Cardiac septum (tissue), 1 donor: ENCODE measurements at regions of chr11 and their contacts with region 1.

Region 1: DNA sequence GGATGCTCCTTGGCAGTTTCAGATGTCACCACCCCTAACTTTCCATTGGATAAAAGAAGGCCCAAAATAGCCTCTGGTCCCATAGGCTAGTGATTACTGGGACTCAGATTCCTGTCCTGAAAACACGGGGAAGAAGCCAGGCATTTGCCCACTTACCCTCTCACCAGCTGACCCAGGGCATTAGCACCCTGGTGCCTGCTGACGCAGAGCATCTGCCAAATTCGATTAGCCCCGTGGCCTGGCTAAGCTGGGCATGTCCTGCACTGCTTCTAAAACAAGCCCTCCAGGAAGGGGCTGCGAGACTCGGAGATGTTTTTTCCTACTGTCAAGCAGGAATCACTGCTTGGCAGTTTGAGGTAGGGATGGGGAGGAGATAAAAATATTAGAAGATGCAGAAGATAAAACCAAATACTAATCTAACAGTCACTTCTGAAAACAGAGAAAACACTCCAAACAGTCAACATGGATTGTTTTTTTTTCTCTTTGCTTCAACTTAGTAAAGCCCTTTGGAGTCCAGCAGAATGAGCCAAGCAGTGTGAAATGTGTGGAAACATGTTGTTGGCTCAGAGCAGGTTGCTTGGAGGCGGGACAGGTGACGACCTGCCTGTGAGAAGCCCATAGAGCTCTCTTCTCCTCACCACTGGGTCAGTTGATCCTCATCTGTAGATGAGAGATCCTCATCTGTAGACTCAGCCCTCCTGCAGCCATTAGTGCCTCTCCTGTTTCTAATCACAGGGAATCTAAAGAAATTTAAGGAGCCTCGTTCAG is 54.0 kb downstream of the BDNF start:
- DNase-seq: peak; percentile 77

Region 2: DNA sequence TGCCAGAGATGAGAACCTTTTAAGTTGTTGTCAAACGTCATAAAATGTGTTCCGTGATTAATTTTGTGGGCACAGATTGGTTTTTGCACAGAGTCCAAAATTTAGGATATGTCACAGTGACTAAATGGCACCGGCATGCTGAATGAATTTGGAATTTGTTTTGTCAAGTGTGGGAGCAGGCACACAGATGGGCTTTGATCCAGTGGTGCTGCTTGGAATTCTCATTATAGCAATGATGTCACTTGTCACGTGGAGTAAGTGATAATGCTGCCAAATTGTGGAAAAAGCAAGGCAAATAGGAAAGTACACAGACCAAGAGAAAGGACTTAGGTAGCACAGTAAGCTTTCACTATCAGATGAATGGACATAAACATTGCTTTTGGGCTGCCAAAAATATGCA is 131.7 kb before region 1 on chr11:
- intact Hi-C with region 1: loop called (anchors 5 kb)
- DNase-seq: no peak

Region 3: DNA sequence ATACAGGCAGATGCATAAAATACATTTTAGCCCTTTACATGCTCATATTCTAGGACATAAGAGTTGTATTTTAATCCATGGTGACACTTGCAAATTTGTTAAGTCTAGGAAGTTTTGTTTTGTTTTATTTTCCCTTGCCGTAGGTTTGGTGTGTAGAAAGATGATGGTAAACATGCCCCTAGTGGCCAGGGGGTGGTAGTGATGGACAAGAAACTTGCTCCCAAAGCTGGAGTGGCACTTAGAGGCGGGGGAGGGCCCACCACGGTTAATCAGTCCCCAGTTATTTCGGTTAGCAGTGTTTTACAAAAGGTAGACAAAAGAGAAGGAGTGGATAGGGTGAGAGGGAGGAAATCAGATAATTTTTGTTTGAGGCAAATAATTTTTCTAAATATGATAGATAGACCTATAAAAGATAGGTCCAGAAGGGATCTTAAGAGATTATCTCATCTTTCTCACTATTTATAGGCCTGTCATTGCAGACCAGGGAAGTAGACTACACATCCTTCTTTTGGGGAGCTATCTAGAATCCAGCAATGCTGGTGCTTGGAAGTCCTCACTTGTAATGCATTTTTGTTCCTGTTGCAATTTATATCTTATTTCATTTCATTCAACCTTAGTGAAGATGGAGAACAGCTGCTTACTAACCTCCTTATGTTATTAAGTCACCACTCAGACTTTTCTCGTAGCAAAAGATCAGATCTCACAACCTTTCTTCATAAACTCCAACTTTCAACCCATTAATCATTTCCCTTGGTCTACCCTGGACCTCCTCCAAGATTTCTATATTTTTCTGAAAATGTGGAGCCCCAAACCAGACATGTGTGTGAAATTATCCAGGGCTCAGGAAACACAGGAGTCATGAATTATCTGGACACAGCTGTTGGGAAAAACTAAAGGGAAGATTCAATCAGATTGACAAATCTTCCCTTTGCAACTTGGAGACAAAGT is 59.9 kb after region 1 on chr11:
- intact Hi-C with region 1: no loop called
- DNase-seq: no peak